ENCODE measurements at regions of chr14 and their contacts with region 1.

Region 1: DNA sequence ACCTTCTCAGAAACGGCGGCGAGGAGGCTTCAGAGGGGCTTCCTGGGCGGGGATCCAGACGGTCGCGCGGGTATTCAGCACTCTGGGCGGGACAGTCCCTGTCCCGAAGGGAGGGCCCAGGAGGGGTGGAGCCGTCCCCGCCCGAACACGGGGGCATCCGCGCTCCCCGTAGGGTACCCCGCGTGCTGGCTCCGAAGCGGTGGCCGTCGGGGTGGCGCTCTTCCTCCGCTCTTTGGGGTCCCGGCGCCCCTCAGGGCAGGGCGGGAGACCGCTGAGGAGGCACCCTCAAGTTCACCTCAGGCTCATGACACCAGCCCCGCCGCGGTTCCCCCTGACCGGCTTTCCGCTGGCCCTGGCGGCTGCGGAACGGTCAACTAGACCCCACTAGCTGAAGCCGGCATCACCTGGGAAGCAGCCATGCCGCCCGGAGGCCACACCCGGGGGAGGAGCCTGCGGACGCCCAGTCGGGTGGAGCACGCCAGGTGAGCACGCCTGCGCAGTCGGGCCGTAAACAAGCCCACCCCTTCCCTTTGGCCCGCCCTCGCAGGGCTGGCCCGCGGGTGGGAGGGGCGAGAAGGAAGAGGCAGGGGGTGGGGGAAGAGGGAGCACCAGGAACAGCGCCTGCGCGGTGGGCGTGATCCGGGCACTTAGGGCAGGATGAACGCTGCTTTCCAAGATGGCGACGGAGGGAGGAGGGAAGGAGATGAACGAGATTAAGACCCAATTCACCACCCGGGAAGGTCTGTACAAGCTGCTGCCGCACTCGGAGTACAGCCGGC is at the start of gene WDR20:
- DNase-seq: peak; percentile 95 to 100 (median 100)
- ATAC-seq: peak; percentile 88 to 91
- H3K4me3 Mint-ChIP-seq: peak within 1 kb of the TSS; percentile 93 to 99 (median 98)
- H3K27ac Mint-ChIP-seq: peak within 1 kb of the TSS; percentile 94 to 99 (median 98)
- H3K4me1 Mint-ChIP-seq: peaks cover 12 to 33% (median 24%) of the 10 kb centered on the region in 4 donors
- H3K27me3 Mint-ChIP-seq: no peaks in the 10 kb centered on the region
- polyA plus RNA-seq, gene WDR20: 11.3 to 15.0 (median 12.9) TPM

Region 2: DNA sequence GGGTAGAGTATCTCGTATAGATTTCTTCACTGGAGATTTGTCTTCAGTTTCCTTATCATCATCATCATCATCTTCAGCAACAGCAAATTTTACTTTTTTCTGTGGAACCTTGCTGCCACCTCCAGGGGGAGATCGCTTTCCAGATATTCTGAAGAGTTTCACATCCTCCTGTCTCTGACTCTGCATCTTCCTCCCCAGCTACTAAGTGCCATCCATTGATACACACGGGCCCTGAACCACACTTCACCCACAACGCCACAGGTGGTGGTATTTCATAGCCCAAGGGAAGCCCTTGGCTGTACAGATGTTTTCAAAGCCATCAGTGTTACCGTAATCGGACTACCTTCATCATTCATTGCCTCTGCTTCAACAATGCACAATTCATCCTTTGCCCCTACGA is 295.8 kb before region 1 on chr14:
- POLR2A ChIA-PET with region 1: no interaction called
- DNase-seq: peak in 9 of 10 donors; percentile 46 to 76 (median 56)
- ATAC-seq: peak; percentile 72 to 82
- H3K4me3 Mint-ChIP-seq: peak overlapping the region in 9 of 10 donors; percentile 15 to 69 (median 40)
- H3K27ac Mint-ChIP-seq: peak overlapping the region; percentile 65 to 95 (median 86)
- H3K4me1 Mint-ChIP-seq: peaks cover 39 to 95% (median 91%) of the 10 kb centered on the region in 4 donors
- H3K27me3 Mint-ChIP-seq: no peaks in the 10 kb centered on the region

Region 3: DNA sequence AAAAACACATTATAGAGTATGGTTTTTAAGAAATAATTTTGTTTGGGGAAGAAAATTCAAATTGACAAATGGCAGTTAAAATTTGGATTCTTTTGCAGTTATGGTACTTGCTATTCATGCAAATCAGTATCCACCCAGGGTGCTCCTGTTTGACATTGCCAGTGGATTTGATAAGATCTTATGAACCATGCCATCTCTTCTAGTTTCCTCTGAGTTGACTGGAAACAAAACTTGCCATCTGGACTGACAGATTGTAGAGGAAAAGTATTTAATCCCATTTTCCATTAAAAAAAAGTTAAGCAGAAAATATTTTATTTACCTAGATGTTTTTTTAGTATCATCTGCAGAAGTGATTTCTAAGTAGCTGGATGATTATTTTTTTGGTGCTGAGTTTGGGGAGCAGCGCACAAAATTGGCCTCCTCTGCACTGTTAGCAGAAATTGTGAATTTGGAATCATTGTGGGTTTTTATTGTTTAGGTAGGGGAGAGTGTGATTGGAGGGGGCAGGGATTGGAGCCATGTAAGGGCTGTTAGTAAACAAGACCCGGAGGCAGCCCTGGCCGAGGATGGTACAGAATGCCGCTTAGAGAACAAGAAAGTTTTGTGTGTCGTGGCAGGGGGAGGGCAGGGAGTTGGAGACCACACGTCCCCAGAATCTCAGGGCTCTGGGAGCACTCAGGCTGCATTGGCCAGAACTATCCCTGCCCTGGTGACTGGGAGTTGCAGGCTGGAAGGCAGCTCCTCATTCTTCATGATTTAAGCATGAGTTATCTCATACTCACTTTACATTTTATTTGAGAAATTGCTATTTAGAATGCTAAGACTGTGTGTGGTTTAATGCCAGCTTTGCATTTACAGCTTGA is 56.8 kb after region 1 on chr14:
- POLR2A ChIA-PET with region 1: interaction called, 12 read pairs
- DNase-seq: no peak
- ATAC-seq: no peak
- H3K4me3 Mint-ChIP-seq: peak overlapping the region in 2 of 10 donors; percentile 4 to 54
- H3K27ac Mint-ChIP-seq: peak overlapping the region in 7 of 10 donors; percentile 10 to 78 (median 31)
- H3K4me1 Mint-ChIP-seq: peaks cover 47 to 83% (median 76%) of the 10 kb centered on the region in 4 donors
- H3K27me3 Mint-ChIP-seq: no peaks in the 10 kb centered on the region